Activated CD4-positive, alpha-beta T cell treated with anti-CD3 and anti-CD28 coated beads for 36 hours (primary cell): ENCODE measurements at regions of chr2 and their contacts with region 1.

Region 1: DNA sequence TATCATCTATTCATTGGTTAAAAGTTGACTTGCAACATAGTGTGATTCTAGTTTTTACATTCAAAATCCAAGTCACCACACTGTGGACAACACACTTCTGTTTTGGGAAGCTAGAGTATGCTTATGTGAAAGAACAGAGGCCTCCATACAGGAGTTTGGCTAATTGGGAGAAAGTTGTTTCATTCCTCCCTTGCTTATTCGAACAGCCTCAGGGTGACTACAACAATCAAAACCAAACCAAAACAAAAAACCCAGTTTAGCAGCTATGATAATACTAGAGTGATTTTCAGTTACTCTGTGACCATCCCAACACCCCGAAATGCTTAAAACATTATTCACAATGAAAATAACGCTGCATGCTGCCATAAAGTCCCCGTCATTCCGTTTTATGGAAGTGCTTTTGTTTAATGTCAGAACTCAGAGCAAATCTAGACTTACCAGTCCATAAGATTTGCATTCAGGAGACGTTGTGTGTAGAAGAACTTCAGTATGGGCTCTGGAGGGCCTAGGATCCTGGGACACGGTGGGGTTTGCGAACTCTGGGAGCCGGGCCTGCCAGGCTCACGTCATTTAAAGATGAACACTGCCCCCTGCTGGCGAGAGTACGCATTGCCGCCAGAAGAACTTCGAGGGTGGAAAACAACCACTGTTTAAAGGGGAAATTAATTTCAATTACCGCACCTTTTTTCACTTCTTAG is 111.4 kb downstream of the FTCDNL1 start:
- DNase-seq: peak; percentile 81
- ATAC-seq: peak; percentile 58
- H3K4me3 Mint-ChIP-seq: no peak overlapping the region
- H3K27ac Mint-ChIP-seq: no peak overlapping the region
- H3K4me1 Mint-ChIP-seq: peaks cover 5% of the 10 kb centered on the region
- H3K27me3 Mint-ChIP-seq: peaks cover 22% of the 10 kb centered on the region

Region 2: DNA sequence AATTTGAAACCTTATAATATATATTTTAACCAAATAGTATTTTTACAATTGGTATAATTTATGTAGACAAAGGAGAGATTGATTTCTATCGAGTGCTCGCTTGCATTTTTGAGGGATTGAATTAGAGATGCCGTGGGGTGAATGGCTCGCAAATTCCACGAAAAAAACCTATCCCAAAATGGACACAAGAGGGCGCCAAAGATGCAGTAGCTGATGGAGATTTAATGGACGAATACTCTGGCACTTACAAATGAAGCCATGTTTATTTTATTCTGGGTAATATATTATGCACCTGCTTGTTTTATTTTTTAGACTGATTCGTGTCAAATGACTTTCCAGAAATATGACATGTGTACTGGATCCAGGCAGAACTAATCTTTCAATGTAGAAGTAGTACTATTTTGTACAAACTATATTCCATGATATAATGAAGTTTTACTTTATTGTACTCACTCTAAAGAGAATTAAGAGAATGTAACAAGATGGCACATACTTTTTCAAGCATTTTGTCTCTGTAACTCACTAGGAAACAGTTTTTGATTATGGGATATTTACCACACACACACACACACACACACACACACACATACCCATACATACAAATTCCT is 1429.8 kb before region 1 on chr2:
- CTCF ChIA-PET with region 1: interaction called, 23 read pairs
- POLR2A ChIA-PET with region 1: no interaction called
- intact Hi-C with region 1: loop called (anchors 2 to 10 kb)
- DNase-seq: peak; percentile 69
- ATAC-seq: no peak
- H3K4me3 Mint-ChIP-seq: no peak overlapping the region
- H3K27ac Mint-ChIP-seq: no peak overlapping the region
- H3K4me1 Mint-ChIP-seq: no peaks in the 10 kb centered on the region
- H3K27me3 Mint-ChIP-seq: peaks cover 33% of the 10 kb centered on the region

Region 3: DNA sequence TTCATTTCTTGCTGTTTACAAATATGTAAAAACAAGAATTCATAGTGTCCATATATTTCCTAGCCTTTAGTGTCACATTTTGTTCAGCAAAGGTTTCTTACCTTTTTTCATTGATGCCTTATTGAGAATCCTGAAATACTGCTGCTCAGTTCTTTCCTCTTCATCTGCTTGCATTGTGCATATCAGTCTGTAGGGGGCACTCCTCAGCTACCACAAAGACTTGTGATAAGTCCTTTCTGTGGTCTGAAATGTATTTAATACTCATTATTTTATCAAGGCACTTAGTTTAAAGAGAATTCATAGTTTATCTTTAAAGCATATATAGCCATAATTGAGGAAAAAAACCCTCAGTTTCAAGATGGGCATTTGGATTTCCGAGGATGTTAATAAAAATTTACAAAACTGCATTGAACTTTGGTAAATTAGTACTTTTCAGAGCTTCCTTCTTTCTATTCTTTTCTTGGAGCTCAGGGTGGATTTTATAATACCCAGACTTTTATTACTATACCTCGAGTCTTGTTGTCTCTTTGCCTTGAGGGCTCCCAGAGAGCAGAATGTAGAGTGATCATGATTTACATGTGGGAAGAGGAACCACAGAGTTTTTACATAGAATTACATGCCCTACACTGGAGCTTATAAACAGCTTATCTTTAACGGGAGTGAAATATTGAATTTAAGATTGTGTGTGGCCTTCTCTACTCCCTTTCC is 1365.0 kb before region 1 on chr2:
- CTCF ChIA-PET with region 1: interaction called, 3 read pairs
- POLR2A ChIA-PET with region 1: no interaction called
- intact Hi-C with region 1: loop called in 1 of 2 experiments (anchors 5 kb)
- DNase-seq: peak; percentile 62
- ATAC-seq: no peak
- H3K4me3 Mint-ChIP-seq: no peak overlapping the region
- H3K27ac Mint-ChIP-seq: no peak overlapping the region
- H3K4me1 Mint-ChIP-seq: peaks cover 9% of the 10 kb centered on the region
- H3K27me3 Mint-ChIP-seq: peaks cover 31% of the 10 kb centered on the region

Region 4: DNA sequence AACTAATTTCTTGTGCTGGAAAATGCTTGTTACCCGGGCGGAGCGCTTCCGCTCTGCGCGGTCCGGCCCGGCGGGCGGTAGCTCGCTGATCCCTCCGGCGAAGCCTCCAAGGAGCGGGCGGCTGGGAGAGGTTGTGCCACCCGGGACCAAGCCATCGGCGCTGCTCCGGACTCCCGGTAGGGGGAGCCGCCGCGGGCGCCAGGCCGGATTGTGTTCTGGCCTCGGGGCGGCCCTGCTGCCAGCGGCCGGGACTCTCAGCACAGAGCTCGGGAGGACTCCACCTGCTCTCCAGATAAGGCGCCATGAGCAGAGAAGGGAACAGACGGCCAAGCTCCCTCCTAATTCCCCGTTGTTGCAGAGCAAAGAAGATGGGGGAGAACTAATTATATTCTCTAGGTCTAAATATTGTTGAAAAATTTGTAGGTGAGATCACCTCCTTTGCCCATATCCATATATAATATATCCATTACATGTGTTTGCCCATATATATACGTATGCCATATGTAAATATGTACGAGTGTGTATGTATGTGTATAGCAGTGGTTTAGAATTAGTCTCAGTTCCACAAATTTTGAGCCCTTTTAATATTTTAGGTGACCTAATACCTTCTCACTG is 268.0 kb before region 1 on chr2:
- CTCF ChIA-PET with region 1: no interaction called
- POLR2A ChIA-PET with region 1: no interaction called
- intact Hi-C with region 1: loop called in 1 of 2 experiments (anchors 10 kb)
- DNase-seq: peak; percentile 69
- ATAC-seq: peak; percentile 71
- H3K4me3 Mint-ChIP-seq: no peak overlapping the region
- H3K27ac Mint-ChIP-seq: no peak overlapping the region
- H3K4me1 Mint-ChIP-seq: peaks cover 17% of the 10 kb centered on the region
- H3K27me3 Mint-ChIP-seq: peaks cover 70% of the 10 kb centered on the region

Region 5: GRCh38 chr2:199596549-199596948 is 143.0 kb before region 1 on chr2:
- CTCF ChIA-PET with region 1: interaction called, 4 read pairs
- POLR2A ChIA-PET with region 1: no interaction called
- intact Hi-C with region 1: loop called (anchors 5 kb)
- DNase-seq: no peak
- ATAC-seq: no peak
- H3K4me3 Mint-ChIP-seq: no peak overlapping the region
- H3K27ac Mint-ChIP-seq: no peak overlapping the region
- H3K4me1 Mint-ChIP-seq: no peaks in the 10 kb centered on the region
- H3K27me3 Mint-ChIP-seq: peaks cover 11% of the 10 kb centered on the region

Region 6: DNA sequence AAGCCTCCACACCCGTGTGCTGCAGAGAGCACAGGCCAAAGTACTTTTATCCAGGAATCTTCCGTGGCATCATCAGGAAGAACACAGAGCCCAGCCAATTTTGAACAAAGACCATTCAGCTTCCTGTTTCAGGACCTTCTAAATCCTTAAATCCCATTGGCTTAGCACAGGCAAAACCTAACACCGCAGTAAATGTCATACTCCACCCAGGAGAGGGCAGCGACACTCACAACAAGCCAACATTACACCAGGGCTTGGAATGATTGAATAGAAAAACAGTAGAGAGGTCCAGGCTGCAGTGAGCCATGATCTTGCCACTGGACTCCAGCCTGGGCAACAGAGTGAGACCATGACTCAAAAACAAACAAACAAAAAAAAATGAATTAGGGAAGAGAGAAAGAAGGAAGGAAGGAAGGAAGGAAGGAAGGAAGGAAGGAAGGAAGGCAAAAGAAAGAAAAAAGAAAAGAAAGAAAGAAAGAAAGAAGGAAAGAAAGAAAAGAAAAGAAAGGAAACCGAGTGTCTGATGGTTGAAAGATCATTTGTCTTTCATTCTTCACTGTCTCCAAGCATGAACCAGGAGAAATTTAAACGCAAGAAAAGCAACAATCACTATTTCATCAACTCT is 137.2 kb before region 1 on chr2:
- CTCF ChIA-PET with region 1: interaction called, 5 read pairs
- POLR2A ChIA-PET with region 1: no interaction called
- intact Hi-C with region 1: loop called (anchors 5 kb)
- DNase-seq: peak; percentile 19
- ATAC-seq: no peak
- H3K4me3 Mint-ChIP-seq: no peak overlapping the region
- H3K27ac Mint-ChIP-seq: no peak overlapping the region
- H3K4me1 Mint-ChIP-seq: no peaks in the 10 kb centered on the region
- H3K27me3 Mint-ChIP-seq: peaks cover 11% of the 10 kb centered on the region

Region 7: DNA sequence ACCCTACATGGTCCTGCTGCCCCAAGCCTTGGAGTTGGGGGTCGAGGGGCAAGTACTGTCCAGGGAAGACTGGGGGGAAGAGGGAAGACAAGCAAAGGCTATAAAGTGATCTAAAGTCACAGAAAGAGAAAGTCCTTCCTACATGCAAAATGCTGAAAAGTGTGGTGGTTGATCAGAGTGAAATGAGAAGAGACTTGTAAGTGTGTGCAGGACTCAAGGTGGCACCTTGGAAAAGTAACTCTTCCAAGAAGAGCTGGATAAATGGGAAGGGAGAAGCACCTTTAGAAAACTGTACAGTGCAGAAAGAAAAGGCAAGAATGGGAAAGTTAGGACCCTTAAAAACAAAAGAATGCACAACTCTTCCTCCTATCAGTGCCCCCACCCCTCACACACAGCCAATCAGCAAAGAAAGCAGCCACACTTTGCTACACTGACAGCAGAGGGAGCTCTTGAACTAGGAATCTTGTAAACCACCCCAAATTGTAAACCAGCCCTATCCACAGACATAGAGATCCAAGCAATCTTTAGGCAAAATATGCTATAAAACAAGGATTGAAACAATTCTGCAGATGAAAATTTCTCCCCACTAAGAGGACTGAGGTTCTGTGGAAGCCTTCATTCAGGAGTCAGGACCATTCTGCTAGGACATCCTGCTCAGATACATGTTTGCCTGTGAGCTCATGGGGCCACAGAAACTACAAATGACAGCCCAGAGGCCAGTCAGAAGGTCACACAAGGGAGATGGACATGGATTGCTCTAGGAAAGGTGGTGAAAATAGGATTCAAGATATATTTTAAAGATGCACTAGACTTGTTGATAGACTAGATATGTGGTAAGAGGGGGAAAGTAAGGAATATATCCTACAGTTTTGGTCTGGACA is 35.0 kb before region 1 on chr2:
- CTCF ChIA-PET with region 1: interaction called, 49 read pairs
- POLR2A ChIA-PET with region 1: no interaction called
- intact Hi-C with region 1: loop called (anchors 1 to 2 kb)
- DNase-seq: peak; percentile 39
- ATAC-seq: peak; percentile 61
- H3K4me3 Mint-ChIP-seq: no peak overlapping the region
- H3K27ac Mint-ChIP-seq: no peak overlapping the region
- H3K4me1 Mint-ChIP-seq: no peaks in the 10 kb centered on the region
- H3K27me3 Mint-ChIP-seq: peaks cover 3% of the 10 kb centered on the region